Activated T-helper 1 cell treated with anti-CD3 and anti-CD28 coated beads, Interleukin-12 subunit alpha, Interleukin-12 subunit beta, Interleukin-2, Interleukin-4 antibody, amounts not matched to agents 30 ng/mL and 10 ng/mL and 1 ng/mL, durations not matched to agents 14 hours and 24 hours and 36 hours (primary cell): ENCODE measurements at regions of chr16 and their contacts with region 1.

Region 1: GRCh38 chr16:79601931-79602627 is 1.5 kb upstream of the MAF start:
- DNase-seq: peak; percentile 75
- H3K4me3 Mint-ChIP-seq: peak overlapping the region; percentile 92
- H3K27ac Mint-ChIP-seq: peak overlapping the region; percentile 98
- H3K4me1 Mint-ChIP-seq: peaks cover 51% of the 10 kb centered on the region
- H3K27me3 Mint-ChIP-seq: peaks cover 9% of the 10 kb centered on the region

Region 2: DNA sequence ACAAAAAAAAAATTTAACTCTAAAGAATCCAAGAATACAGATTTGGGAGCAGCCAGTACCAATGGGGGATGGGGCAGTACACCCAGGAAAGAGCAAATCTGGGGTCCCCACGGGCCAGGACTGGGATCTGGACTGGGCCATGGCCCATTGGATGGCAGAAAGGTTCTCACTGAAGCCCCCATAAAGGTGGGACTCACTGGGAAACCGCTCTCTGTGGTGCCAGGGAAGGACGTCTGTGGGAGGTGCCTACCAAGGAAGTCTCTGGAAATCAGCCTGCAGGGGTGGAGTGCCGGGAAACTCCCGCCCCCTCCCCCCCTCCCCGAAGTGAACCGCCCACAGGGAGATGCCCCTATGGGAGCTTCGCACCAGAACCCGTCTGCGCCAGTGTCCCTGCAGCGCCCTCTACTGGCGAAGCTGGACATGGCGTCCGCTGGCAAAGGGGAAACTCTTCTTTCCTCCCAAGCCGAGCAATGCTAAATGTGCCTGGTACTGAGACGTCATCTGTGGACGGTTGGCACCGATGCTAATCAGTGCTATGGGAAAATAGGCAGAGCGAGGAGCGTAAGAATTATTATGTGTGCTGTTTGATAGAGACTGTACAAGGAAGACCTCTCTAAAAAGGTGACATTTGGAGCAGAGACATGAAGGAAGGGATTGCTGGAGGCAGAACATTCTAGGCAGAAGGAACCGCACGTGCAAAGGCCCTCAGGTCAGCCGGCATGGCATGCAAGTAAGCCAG is 831.6 kb before region 1 on chr16:
- intact Hi-C with region 1: loop called (anchors 1 kb)
- DNase-seq: peak; percentile 65
- H3K4me3 Mint-ChIP-seq: peak overlapping the region; percentile 16
- H3K27ac Mint-ChIP-seq: peak overlapping the region; percentile 65
- H3K4me1 Mint-ChIP-seq: peaks cover 54% of the 10 kb centered on the region
- H3K27me3 Mint-ChIP-seq: no peaks in the 10 kb centered on the region

Region 3: GRCh38 chr16:79071424-79071823 is 530.7 kb before region 1 on chr16:
- intact Hi-C with region 1: loop called (anchors 1 kb)
- DNase-seq: no peak
- H3K4me3 Mint-ChIP-seq: no peak overlapping the region
- H3K27ac Mint-ChIP-seq: peak overlapping the region; percentile 21
- H3K4me1 Mint-ChIP-seq: peaks cover 74% of the 10 kb centered on the region
- H3K27me3 Mint-ChIP-seq: peaks cover 5% of the 10 kb centered on the region

Region 4: DNA sequence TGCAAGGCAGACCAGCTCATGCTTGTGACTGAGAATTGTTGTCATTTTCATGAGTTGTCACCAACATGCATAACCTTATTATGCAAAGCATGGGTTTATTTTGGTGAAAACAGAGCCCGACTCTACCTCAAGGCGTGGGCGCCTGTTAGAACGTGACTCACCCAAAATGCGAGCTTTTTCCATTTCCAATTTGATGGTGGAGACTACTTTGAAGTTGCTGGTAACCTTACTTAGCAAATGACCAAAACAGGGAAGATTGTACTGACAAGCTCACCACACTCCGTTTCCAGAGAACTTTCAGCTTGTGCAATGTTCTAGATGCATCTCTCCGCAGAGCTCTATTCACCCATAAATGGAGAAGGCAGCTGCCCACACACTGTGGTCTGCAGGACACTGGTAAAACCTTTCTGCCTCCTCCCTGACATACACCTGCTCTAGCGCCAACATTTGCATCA is 286.0 kb before region 1 on chr16:
- intact Hi-C with region 1: loop called (anchors 1 kb)
- DNase-seq: peak; percentile 54
- H3K4me3 Mint-ChIP-seq: peak overlapping the region; percentile 64
- H3K27ac Mint-ChIP-seq: peak overlapping the region; percentile 90
- H3K4me1 Mint-ChIP-seq: peaks cover 29% of the 10 kb centered on the region
- H3K27me3 Mint-ChIP-seq: peaks cover 10% of the 10 kb centered on the region

Region 5: GRCh38 chr16:79668502-79668901 is 66.4 kb after region 1 on chr16:
- intact Hi-C with region 1: loop called (anchors 1 kb)
- DNase-seq: no peak
- H3K4me3 Mint-ChIP-seq: no peak overlapping the region
- H3K27ac Mint-ChIP-seq: no peak overlapping the region
- H3K4me1 Mint-ChIP-seq: peaks cover 7% of the 10 kb centered on the region
- H3K27me3 Mint-ChIP-seq: peaks cover 6% of the 10 kb centered on the region

Region 6: GRCh38 chr16:79843631-79844043 is 241.6 kb after region 1 on chr16:
- intact Hi-C with region 1: loop called (anchors 1 kb)
- DNase-seq: no peak
- H3K4me3 Mint-ChIP-seq: peak overlapping the region; percentile 45
- H3K27ac Mint-ChIP-seq: peak overlapping the region; percentile 70
- H3K4me1 Mint-ChIP-seq: peaks cover 42% of the 10 kb centered on the region
- H3K27me3 Mint-ChIP-seq: no peaks in the 10 kb centered on the region